A549 (cell line): ENCODE measurements at regions of chr6 and their contacts with region 1.

Region 1: GRCh38 chr6:16183187-16183664 is 54.3 kb downstream of the MYLIP start:
- DNase-seq: peak; percentile 16 to 42
- ATAC-seq: peak; percentile 30 to 48; a peak in 2 of 6 replicates
- H3K4me3 ChIP-seq: no peak overlapping the region
- H3K27ac ChIP-seq: no peak overlapping the region
- H3K4me1 ChIP-seq: no peaks in the 10 kb centered on the region
- CTCF ChIP-seq: peak; percentile 60
- EP300 ChIP-seq: no peak
- POLR2A ChIP-seq: no peak
- RAD21 ChIP-seq: peak; percentile 54 to 59

Region 2: DNA sequence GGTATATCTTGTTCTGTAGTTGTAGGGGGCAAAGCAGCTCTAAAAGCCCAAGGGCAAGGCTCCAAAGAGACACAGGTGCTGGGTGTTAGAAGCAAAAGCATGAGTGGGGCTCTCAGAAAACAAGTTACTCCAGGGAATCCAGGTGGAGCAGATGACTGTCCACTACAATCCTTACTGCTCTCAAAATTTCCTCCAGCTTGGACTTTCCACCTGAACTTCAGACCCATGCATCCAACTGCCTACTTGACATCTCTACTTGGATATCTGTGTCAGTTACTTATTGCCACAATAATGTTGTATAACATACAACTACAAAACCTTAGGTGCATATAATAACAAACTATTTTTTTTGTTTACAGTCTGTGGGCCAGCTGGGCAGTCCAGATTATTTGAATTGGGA is 497.6 kb before region 1 on chr6:
- CTCF ChIA-PET with region 1: interaction called, 10 read pairs
- POLR2A ChIA-PET with region 1: no interaction called
- DNase-seq: no peak
- ATAC-seq: no peak
- H3K4me3 ChIP-seq: no peak overlapping the region
- H3K27ac ChIP-seq: no peak overlapping the region
- H3K4me1 ChIP-seq: no peaks in the 10 kb centered on the region
- CTCF ChIP-seq: no peak
- EP300 ChIP-seq: no peak
- POLR2A ChIP-seq: no peak
- RAD21 ChIP-seq: no peak

Region 3: GRCh38 chr6:15691250-15691869 is 491.9 kb before region 1 on chr6:
- CTCF ChIA-PET with region 1: interaction called, 31 read pairs
- POLR2A ChIA-PET with region 1: no interaction called
- DNase-seq: peak; percentile 51 to 85
- ATAC-seq: peak; percentile 99 to 100
- H3K4me3 ChIP-seq: peak overlapping the region; percentile 32; the same call in 2 of the 3 replicates
- H3K27ac ChIP-seq: no peak overlapping the region
- H3K4me1 ChIP-seq: no peaks in the 10 kb centered on the region; the same call in 2 of the 3 replicates
- CTCF ChIP-seq: peak; percentile 98
- EP300 ChIP-seq: no peak
- POLR2A ChIP-seq: no peak
- RAD21 ChIP-seq: peak; percentile 88 to 94

Region 4: DNA sequence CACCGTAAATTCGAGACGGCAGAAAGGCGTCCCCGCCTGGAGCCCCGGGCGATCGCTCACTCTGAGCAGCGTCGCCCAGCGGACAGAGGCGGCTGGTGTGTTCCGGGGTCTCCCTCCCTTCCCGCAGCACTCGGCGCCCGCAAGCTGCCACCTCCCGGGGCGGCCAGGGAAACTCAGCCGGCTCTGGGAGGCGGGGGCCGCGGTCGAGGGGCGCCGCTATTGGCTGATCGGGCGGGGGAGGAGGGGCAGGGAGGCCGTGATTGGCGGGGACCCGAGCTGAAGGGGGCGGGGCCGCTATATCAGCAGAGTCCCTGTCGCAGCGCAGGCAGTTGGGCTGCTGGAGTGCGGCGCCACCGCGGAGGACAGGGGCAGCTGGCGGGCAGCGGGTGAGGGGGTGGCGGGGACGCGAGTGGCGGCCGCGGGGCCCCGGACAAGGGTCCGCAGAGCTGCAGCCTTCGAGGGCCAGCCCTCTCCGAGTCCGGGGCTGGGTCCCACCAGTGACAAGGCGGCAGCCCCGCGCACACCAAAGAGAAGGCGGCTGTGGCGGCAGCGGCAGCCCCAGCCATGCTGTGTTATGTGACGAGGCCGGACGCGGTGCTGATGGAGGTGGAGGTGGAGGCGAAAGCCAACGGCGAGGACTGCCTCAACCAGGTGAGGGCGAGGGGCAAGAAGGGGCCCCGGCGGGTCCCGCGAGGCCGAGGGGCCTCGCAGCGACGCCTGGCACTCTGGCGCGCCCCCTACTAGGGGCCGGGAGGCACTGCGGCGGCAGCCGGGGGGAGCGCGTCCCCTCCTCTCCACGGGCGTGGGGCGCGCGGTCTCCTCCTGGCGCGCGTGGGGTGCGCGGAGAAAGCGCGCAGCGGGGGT is 54.2 kb before region 1 on chr6 and contains the start of gene MYLIP:
- CTCF ChIA-PET with region 1: interaction called, 4 read pairs
- POLR2A ChIA-PET with region 1: interaction called, 10 read pairs
- DNase-seq: peak; percentile 77 to 90
- ATAC-seq: peak; percentile 88 to 94
- H3K4me3 ChIP-seq: peak within 1 kb of the TSS; percentile 81
- H3K27ac ChIP-seq: peak within 1 kb of the TSS; percentile 87 to 93
- H3K4me1 ChIP-seq: peaks cover 28% of the 10 kb centered on the region; the same call in 2 of the 3 replicates
- CTCF ChIP-seq: peak; percentile 59
- EP300 ChIP-seq: no peak
- POLR2A ChIP-seq: peak; percentile 100
- RAD21 ChIP-seq: peak; percentile 7 to 59; a peak in 3 of 5 replicates
- polyA plus RNA-seq, gene MYLIP: 8.6 and 9.1 TPM in 2 replicates

Region 5: DNA sequence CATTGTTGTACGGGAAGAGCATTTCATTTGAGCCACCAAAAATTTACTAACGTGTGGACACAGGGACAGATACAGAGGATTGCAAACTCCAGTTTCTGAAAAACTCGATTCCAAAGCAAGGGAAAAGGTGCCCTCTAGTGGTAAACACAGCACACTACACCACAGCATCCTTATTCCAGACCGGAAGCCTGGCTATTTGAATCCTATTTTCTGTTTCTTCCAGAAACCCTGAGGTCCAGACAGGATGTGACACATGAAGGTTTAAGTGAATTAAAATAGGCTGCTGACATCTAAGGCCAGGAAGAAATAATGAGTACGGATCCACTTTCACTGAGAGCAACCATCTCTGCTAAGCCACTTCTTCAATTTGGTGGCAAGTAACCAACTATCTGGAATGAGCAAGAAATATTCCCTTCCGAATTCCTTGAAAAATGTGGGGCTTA is 23.4 kb after region 1 on chr6:
- CTCF ChIA-PET with region 1: interaction called, 13 read pairs
- POLR2A ChIA-PET with region 1: no interaction called
- DNase-seq: peak; percentile 49
- ATAC-seq: peak; percentile 84 to 85
- H3K4me3 ChIP-seq: no peak overlapping the region
- H3K27ac ChIP-seq: no peak overlapping the region
- H3K4me1 ChIP-seq: no peaks in the 10 kb centered on the region
- CTCF ChIP-seq: peak; percentile 83
- EP300 ChIP-seq: no peak
- POLR2A ChIP-seq: no peak
- RAD21 ChIP-seq: peak; percentile 81 to 82